ENCODE measurements at regions of chr3 and their contacts with region 1.

Region 1: GRCh38 chr3:108602249-108602934 is 12.9 kb downstream of the DZIP3 start:
- DNase-seq: no peak
- ATAC-seq: peak; percentile 73
- H3K4me3 ChIP-seq: peak overlapping the region; percentile 10; the same call in 1 of the 2 replicates
- H3K27ac ChIP-seq: no peak overlapping the region
- H3K4me1 ChIP-seq: peaks cover 9% of the 10 kb centered on the region
- H3K27me3 ChIP-seq: no peaks in the 10 kb centered on the region
- CTCF ChIP-seq: no peak
- EP300 ChIP-seq: no peak
- POLR2A ChIP-seq: no peak
- RAD21 ChIP-seq: no peak

Region 2: GRCh38 chr3:108589146-108589997 is 13.0 kb before region 1 on chr3 and contains the starts of genes CIP2A and DZIP3:
- CTCF ChIA-PET with region 1: interaction called, 47 read pairs
- POLR2A ChIA-PET with region 1: interaction called, 18 read pairs
- RAD21 ChIA-PET with region 1: interaction called, 24 read pairs
- SMC1A ChIA-PET with region 1: interaction called, 30 read pairs
- in situ Hi-C with region 1: no loop called
- intact Hi-C with region 1: no loop called
- DNase-seq: peak; percentile 85
- ATAC-seq: peak; percentile 93
- H3K4me3 ChIP-seq: peak within 1 kb of the TSS; percentile 80
- H3K27ac ChIP-seq: peak within 1 kb of the TSS; percentile 91
- H3K4me1 ChIP-seq: 0 out of 2 replicates have a peak, but pooled peaks cover 2% of the 10 kb centered on the region
- H3K27me3 ChIP-seq: no peaks in the 10 kb centered on the region
- CTCF ChIP-seq: no peak; a peak in 1 of 6 replicates
- EP300 ChIP-seq: no peak
- POLR2A ChIP-seq: peak; percentile 95
- RAD21 ChIP-seq: no peak
- polyA plus RNA-seq, gene CIP2A: 12.5 to 18.8 TPM
- polyA plus RNA-seq, gene DZIP3: 4.3 to 7.8 TPM

Measured in GM12878 (cell line).